OCI-LY7 (cell line): ENCODE measurements at regions of chr19 and their contacts with region 1.

Region 1: DNA sequence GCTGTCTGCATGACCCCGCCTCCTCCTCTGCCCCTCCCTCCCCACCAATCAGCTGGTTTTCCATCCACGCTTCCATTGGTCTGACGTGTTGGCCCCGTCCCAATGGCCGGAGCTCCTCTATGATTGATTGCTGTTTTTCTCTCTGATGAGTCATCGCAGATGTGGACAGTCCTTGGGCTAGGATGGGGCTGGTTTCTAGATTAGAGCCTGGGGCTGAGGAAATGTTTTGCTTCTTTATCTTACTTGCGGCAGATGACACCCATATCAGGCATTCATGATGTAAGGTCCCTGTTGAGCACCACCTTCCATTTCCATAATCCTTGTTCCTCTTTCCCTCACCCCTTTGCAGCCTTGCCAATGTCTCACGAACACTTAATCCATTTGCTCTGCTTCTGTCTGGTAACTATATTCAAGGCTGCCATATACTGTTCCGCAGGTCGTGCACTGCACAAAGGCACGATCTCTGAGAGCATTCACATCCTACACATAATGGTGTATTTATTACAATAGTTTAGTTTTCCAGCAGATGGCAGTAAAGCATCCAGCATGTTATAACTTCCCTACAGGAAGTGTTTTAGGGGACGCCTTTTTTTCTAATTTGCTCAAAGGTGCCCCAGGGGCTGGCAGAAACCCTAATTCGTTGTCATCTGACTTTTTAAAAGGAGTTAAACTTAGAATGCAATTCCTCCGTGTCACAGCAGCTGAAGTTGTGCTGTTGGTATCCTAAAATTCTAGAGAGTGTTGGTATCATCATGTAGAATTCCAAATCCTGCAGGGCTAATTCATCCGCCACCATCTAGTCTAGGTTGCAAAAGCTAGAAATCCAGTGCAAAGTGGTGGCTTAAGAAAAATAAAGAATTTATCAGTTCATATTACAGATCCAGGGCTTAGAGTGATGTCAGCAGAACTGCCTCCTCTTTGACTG is 73.5 kb downstream of the MAP4K1 start:
- DNase-seq: peak; percentile 89
- H3K4me3 ChIP-seq: peak overlapping the region; percentile 43
- H3K27ac ChIP-seq: no peak overlapping the region
- H3K4me1 ChIP-seq: peaks cover 26% of the 10 kb centered on the region
- CTCF ChIP-seq: peak; percentile 89

Region 2: GRCh38 chr19:38527466-38528136 is 16.7 kb before region 1 on chr19:
- CTCF ChIA-PET with region 1: no interaction called
- POLR2A ChIA-PET with region 1: no interaction called
- intact Hi-C with region 1: no loop called
- DNase-seq: peak; percentile 41
- H3K4me3 ChIP-seq: no peak overlapping the region
- H3K27ac ChIP-seq: no peak overlapping the region
- H3K4me1 ChIP-seq: no peaks in the 10 kb centered on the region
- CTCF ChIP-seq: no peak

Region 3: DNA sequence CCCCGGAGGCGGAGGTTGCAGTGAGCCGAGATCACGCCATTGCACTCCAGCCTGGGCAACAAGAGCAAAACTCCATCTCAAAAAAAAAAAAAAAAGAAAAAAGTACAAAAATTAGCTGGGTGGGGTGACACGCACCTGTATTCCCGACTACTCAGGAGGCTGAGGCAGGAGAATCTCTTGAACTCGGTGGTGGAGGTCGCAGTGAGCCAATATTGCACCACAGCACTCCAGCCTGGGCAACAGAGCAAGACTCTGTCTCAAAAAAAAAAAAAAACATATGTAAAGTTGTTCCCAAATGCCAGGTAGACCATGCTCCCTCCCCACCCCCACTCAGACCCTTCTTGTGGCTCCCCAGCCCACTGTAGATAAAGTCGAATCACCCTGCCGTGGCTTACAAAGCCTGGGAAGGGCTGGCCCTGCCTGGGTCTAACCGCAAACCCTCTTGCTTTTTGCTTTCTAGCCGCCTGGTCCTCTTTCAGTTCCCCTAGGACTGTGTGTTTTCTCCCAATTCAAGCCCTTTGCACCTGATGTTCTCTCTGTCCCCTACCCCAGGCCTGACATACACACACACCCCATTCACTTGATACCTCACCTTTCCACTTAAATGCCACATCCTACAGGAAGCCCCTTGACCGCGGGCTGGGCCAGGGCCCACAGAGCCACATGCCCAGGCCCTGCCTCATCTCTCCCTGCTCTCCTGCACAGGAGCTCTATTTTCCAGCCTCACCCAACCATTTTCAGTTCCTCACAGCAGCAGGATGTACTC is 39.1 kb after region 1 on chr19:
- CTCF ChIA-PET with region 1: no interaction called
- POLR2A ChIA-PET with region 1: no interaction called
- intact Hi-C with region 1: loop called (anchors 1 kb)
- DNase-seq: peak; percentile 74
- H3K4me3 ChIP-seq: no peak overlapping the region
- H3K27ac ChIP-seq: peak overlapping the region; percentile 56
- H3K4me1 ChIP-seq: peaks cover 23% of the 10 kb centered on the region
- CTCF ChIP-seq: no peak

Region 4: DNA sequence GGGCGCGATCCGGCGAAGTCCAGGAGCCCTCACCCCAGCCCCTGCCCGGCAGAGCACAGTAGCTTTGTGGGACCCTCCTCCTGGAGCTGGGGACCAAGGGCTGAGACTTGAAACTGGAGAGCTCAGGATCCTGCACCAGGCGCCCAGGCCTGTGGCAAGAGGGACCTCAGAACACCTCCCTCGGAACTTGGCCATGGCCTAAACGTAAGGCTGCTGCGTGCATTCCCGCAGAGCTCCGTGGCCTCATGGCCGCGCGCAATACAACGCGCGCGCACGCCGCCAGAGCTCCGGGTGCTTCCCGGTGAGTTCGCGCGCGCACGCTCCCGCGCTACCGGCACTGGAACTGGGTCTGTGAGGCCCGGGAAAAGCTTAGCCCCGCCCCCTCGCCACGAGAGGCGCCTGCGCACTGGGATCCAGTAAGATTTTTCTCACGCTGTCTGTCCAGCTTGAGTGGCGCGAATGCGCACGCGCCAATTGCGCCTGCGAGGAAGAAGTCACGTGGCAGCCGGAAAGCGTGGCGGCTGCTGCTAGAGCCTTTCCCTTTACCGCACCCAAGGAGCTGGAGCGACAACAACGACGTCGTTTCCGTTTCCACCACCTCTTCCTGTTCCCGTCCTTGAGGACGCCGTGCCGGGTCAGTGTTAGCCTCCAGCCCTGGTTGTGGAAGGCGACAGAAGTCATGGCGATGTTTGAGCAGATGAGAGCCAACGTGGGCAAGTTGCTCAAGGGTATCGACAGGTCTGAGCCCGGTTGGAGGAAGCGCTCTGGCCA is 74.5 kb after region 1 on chr19 and contains the start of gene EIF3K:
- CTCF ChIA-PET with region 1: interaction called, 3 read pairs
- POLR2A ChIA-PET with region 1: interaction called, 4 read pairs
- intact Hi-C with region 1: loop called (anchors 1 kb)
- DNase-seq: peak; percentile 99
- H3K4me3 ChIP-seq: peak within 1 kb of the TSS; percentile 92
- H3K27ac ChIP-seq: peak within 1 kb of the TSS; percentile 87
- H3K4me1 ChIP-seq: peaks cover 37% of the 10 kb centered on the region
- CTCF ChIP-seq: no peak
- total RNA-seq, gene EIF3K: 321 and 325 TPM in 2 replicates

Region 5: GRCh38 chr19:38634757-38635482 is 90.6 kb after region 1 on chr19:
- CTCF ChIA-PET with region 1: no interaction called
- POLR2A ChIA-PET with region 1: no interaction called
- intact Hi-C with region 1: loop called (anchors 1 kb)
- DNase-seq: peak; percentile 70
- H3K4me3 ChIP-seq: no peak overlapping the region
- H3K27ac ChIP-seq: no peak overlapping the region
- H3K4me1 ChIP-seq: peaks cover 12% of the 10 kb centered on the region
- CTCF ChIP-seq: peak; percentile 91

Region 6: DNA sequence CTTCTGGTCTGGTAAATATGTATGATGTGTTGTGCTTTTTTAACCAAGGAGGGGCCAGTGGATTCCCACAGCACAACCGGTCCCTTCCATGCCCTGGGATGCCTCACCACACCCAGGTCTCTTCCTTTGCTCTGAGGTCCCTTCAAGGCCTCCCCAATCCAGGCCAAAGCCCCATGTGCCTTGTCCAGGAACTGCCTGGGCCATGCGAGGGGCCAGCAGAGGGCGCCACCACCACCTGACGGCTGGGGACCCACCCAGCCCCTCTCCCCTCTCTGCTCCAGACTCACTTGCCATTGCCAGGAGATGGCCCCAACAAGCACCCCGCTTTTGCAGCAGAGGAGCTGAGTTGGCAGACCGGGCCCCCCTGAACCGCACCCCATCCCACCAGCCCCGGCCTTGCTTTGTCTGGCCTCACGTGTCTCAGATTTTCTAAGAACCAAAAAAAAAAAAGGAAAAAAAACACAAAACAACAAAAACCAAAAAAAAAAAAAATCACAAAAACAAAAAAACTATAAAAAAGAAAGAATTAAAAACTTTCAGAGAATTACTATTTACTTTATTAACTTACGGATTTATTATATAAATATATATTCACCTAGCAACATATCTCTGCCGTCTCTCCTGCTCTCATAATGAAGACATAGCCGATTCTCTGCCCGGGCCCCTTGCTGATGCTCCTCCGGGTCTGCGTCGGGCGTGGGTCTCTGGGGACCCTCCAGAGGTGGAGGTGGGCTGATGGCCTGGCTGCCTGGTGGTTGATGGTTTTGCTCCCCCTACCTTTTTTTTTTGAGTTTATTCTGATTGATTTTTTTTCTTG is 185.6 kb after region 1 on chr19:
- CTCF ChIA-PET with region 1: no interaction called
- POLR2A ChIA-PET with region 1: no interaction called
- intact Hi-C with region 1: loop called (anchors 10 kb)
- DNase-seq: peak; percentile 73
- H3K4me3 ChIP-seq: no peak overlapping the region
- H3K27ac ChIP-seq: no peak overlapping the region
- H3K4me1 ChIP-seq: peaks cover 14% of the 10 kb centered on the region
- CTCF ChIP-seq: peak; percentile 91

Region 7: GRCh38 chr19:38929929-38930775 is 385.9 kb after region 1 on chr19 and contains the start of gene SARS2:
- CTCF ChIA-PET with region 1: no interaction called
- POLR2A ChIA-PET with region 1: no interaction called
- intact Hi-C with region 1: loop called (anchors 1 kb)
- DNase-seq: peak; percentile 95
- H3K4me3 ChIP-seq: peak within 1 kb of the TSS; percentile 96
- H3K27ac ChIP-seq: peak within 1 kb of the TSS; percentile 71
- H3K4me1 ChIP-seq: peaks cover 31% of the 10 kb centered on the region
- CTCF ChIP-seq: peak; percentile 99
- total RNA-seq, gene SARS2: 29.5 and 37.7 TPM in 2 replicates